Calu3 (cell line): ENCODE measurements at regions of chr7 and their contacts with region 1.

Region 1: GRCh38 chr7:55132890-55133551 is 114.2 kb downstream of the EGFR start:
- DNase-seq: peak; percentile 89
- H3K4me3 Mint-ChIP-seq: peak overlapping the region; percentile 39
- H3K27ac Mint-ChIP-seq: peak overlapping the region; percentile 95
- H3K4me1 Mint-ChIP-seq: peaks cover 72% of the 10 kb centered on the region
- H3K27me3 Mint-ChIP-seq: no peaks in the 10 kb centered on the region
- CTCF ChIP-seq: peak; percentile 20

Region 2: DNA sequence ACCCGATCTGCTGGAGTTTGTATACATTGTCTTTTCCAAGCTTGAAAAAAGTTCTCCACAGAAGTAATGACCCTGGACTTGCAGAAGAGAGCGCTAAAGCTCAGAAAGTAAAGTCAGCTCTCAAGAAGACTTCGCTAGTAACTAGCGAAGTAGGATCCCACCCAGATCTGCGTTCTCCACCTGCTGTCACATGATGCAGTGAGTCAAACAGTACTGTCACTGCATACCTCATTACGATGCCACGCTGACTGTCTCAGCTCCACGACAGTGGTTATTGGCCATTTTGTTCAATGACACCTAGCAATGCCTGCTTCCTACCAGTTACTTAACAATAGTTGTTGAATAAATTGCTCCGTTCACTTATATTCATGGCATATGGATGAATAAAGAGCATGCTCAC is 344.4 kb before region 1 on chr7:
- CTCF ChIA-PET with region 1: interaction called, 6 read pairs
- intact Hi-C with region 1: loop called (anchors 5 kb)
- DNase-seq: peak; percentile 66
- H3K4me3 Mint-ChIP-seq: no peak overlapping the region
- H3K27ac Mint-ChIP-seq: peak overlapping the region; percentile 79
- H3K4me1 Mint-ChIP-seq: peaks cover 64% of the 10 kb centered on the region
- H3K27me3 Mint-ChIP-seq: no peaks in the 10 kb centered on the region
- CTCF ChIP-seq: peak; percentile 88

Region 3: DNA sequence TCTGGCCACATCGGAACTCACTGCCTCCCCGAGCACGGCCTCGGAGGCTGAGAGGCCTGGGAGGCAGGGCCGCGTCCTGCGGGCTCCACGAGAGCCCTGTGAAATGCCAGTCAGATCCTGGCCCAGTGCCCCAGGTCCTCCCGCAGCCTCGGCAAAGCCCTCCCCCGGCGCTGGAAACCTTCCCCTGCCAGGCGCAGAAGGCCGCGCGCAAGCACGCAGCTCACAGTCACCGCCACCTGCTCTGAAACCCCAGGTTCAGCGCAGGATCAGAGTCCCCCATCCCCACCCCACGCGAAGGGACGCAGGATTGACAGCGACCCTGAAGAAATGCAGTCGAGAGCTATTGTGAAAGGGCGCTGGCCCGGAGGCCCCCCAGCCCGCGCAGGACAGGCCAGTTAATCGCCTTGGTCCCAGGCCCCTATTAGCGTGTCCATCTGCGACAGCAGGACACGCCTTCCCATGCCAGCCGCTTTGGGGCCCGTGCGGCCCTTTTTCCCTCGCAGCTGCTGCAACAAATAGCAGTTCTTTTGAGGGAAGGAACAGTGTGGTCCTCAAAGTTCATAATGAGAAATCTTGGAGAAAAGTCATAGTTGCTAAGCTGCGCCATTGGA is 127.7 kb before region 1 on chr7:
- CTCF ChIA-PET with region 1: no interaction called
- intact Hi-C with region 1: no loop called
- DNase-seq: no peak
- H3K4me3 Mint-ChIP-seq: no peak overlapping the region
- H3K27ac Mint-ChIP-seq: no peak overlapping the region
- H3K4me1 Mint-ChIP-seq: no peaks in the 10 kb centered on the region
- H3K27me3 Mint-ChIP-seq: peaks cover 13% of the 10 kb centered on the region
- CTCF ChIP-seq: no peak

Region 4: GRCh38 chr7:55026866-55027490 is 106.0 kb before region 1 on chr7:
- CTCF ChIA-PET with region 1: no interaction called
- intact Hi-C with region 1: loop called (anchors 5 kb)
- DNase-seq: peak; percentile 42
- H3K4me3 Mint-ChIP-seq: no peak overlapping the region
- H3K27ac Mint-ChIP-seq: peak overlapping the region; percentile 80
- H3K4me1 Mint-ChIP-seq: peaks cover 84% of the 10 kb centered on the region
- H3K27me3 Mint-ChIP-seq: no peaks in the 10 kb centered on the region
- CTCF ChIP-seq: no peak

Region 5: DNA sequence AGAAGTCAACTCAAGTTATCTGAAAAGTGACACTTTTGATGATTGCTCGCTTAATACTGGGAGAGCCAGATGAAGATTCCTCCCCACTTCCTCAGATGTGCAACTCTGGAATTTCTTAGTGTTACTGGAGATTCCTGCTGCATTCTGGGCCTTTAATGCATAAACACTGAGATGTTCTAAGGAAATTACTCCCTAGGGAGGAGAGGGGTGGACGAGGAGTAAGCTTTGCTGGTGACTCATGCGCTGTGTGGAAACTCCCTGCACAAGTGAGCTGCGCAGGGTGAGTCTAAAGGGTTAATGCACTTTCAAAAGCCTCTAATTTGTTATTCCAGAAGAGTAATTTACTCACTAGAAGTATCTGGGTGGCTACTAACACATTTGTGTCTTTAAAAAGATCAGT is 67.9 kb before region 1 on chr7:
- CTCF ChIA-PET with region 1: interaction called, 22 read pairs
- intact Hi-C with region 1: no loop called
- DNase-seq: peak; percentile 64
- H3K4me3 Mint-ChIP-seq: peak overlapping the region; percentile 24
- H3K27ac Mint-ChIP-seq: peak overlapping the region; percentile 38
- H3K4me1 Mint-ChIP-seq: peaks cover 65% of the 10 kb centered on the region
- H3K27me3 Mint-ChIP-seq: no peaks in the 10 kb centered on the region
- CTCF ChIP-seq: no peak

Region 6: DNA sequence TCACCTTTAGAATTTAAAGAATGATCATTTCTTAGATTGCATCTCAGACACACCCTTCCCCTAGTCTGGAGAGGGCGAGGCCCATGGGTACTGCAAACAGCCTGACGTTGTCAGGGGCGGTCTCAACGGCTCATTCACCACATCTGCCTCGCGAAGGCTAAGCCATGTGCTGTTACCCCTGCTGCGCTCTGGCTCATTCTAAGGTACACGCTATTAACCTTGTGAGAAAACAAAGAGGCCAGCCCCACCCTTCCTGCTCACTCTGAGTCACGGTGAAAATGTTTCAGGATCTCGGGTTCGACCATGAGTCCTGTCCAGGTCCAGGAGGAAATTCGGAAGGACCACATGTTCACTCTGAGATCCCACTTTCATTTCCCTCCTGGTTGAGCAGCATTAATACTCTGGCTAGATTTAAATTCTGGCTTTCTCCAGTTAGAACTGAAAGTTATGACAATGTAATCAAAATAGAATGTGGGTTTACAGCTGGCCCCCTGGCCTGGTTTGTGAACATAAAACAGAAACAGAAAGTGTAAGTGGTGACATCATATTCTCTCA is 59.0 kb before region 1 on chr7:
- CTCF ChIA-PET with region 1: interaction called, 6 read pairs
- intact Hi-C with region 1: loop called (anchors 2 kb)
- DNase-seq: peak; percentile 93
- H3K4me3 Mint-ChIP-seq: peak overlapping the region; percentile 66
- H3K27ac Mint-ChIP-seq: peak overlapping the region; percentile 98
- H3K4me1 Mint-ChIP-seq: peaks cover 97% of the 10 kb centered on the region
- H3K27me3 Mint-ChIP-seq: no peaks in the 10 kb centered on the region
- CTCF ChIP-seq: no peak